MCF 10A (cell line): ENCODE measurements at regions of chr7 and their contacts with region 1.

Region 1: GRCh38 chr7:87152107-87152844 is at the start of gene DMTF1:
- DNase-seq: peak; percentile 96
- H3K4me3 Mint-ChIP-seq: peak within 1 kb of the TSS; percentile 82
- H3K27ac Mint-ChIP-seq: peak within 1 kb of the TSS; percentile 98
- H3K4me1 Mint-ChIP-seq: peaks cover 18% of the 10 kb centered on the region
- H3K27me3 Mint-ChIP-seq: no peaks in the 10 kb centered on the region
- CTCF ChIP-seq: no peak
- total RNA-seq, gene DMTF1: 72.8 and 79.7 TPM in 2 replicates

Region 2: DNA sequence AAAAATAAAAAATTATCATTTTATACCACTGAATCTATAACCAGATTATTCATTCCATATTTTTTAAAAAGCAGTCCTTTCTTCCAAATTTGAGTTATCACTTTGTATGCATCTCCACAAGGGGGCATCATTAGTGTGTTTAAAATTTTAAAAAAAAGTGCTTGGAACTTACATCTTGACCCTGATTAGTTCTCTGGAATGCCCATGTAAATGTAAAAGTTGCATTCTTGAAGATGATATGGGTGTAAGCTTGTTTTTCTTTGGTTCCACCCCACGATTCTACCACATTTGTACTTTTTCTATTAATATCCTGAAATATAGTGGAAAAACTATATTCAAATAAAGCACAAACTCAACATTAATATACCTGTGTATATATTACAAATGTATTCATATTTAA is 237.7 kb before region 1 on chr7:
- CTCF ChIA-PET with region 1: interaction called, 39 read pairs
- POLR2A ChIA-PET with region 1: interaction called, 15 read pairs
- intact Hi-C with region 1: no loop called
- DNase-seq: peak; percentile 34
- H3K4me3 Mint-ChIP-seq: no peak overlapping the region
- H3K27ac Mint-ChIP-seq: no peak overlapping the region
- H3K4me1 Mint-ChIP-seq: peaks cover 7% of the 10 kb centered on the region
- H3K27me3 Mint-ChIP-seq: peaks cover 11% of the 10 kb centered on the region
- CTCF ChIP-seq: peak; percentile 40

Region 3: GRCh38 chr7:86932038-86932512 is 220.2 kb before region 1 on chr7:
- CTCF ChIA-PET with region 1: interaction called, 129 read pairs
- POLR2A ChIA-PET with region 1: interaction called, 22 read pairs
- intact Hi-C with region 1: no loop called
- DNase-seq: peak; percentile 84
- H3K4me3 Mint-ChIP-seq: no peak overlapping the region
- H3K27ac Mint-ChIP-seq: peak overlapping the region; percentile 25
- H3K4me1 Mint-ChIP-seq: peaks cover 22% of the 10 kb centered on the region
- H3K27me3 Mint-ChIP-seq: no peaks in the 10 kb centered on the region
- CTCF ChIP-seq: no peak

Region 4: GRCh38 chr7:86949052-86949778 is 203.1 kb before region 1 on chr7:
- CTCF ChIA-PET with region 1: interaction called, 86 read pairs
- POLR2A ChIA-PET with region 1: interaction called, 3 read pairs
- intact Hi-C with region 1: no loop called
- DNase-seq: no peak
- H3K4me3 Mint-ChIP-seq: no peak overlapping the region
- H3K27ac Mint-ChIP-seq: no peak overlapping the region
- H3K4me1 Mint-ChIP-seq: peaks cover 9% of the 10 kb centered on the region
- H3K27me3 Mint-ChIP-seq: no peaks in the 10 kb centered on the region
- CTCF ChIP-seq: no peak

Region 5: GRCh38 chr7:87059525-87060287 is 92.6 kb before region 1 on chr7 and contains the start of gene ELAPOR2:
- CTCF ChIA-PET with region 1: interaction called, 11 read pairs
- POLR2A ChIA-PET with region 1: interaction called, 13 read pairs
- intact Hi-C with region 1: loop called (anchors 5 kb)
- DNase-seq: peak; percentile 41
- H3K4me3 Mint-ChIP-seq: peak within 1 kb of the TSS; percentile 69
- H3K27ac Mint-ChIP-seq: no peak within 1 kb of the TSS
- H3K4me1 Mint-ChIP-seq: peaks cover 9% of the 10 kb centered on the region
- H3K27me3 Mint-ChIP-seq: peaks cover 17% of the 10 kb centered on the region
- CTCF ChIP-seq: peak; percentile 12
- total RNA-seq, gene ELAPOR2: 16.3 and 21.3 TPM in 2 replicates

Region 6: DNA sequence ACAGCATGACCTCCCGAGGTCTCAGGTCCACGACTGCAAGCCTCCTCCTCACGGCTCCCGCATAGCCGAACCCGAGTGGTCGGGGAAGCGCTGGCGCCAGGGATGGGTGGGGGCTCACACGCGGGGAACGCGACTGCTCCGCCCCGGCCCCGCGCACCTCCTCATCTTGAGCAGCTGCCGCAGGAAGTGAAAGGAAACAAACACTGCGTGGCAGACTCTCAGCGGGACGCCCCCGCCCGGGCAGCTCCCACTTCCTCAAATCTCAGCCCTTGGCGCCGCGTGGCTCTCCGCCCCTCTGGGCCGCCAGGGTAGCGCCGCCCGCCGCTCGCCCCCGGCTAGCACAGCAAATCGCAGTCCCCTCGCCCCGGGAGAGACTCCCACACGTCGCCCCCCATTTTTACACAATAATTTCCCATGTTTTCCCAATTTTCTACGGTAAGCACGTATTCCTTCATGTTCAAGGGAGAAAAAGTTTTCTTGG is 67.3 kb after region 1 on chr7 and contains the start of gene TMEM243:
- CTCF ChIA-PET with region 1: interaction called, 14 read pairs
- POLR2A ChIA-PET with region 1: interaction called, 154 read pairs
- intact Hi-C with region 1: loop called (anchors 2 kb)
- DNase-seq: peak; percentile 56
- H3K4me3 Mint-ChIP-seq: peak within 1 kb of the TSS; percentile 98
- H3K27ac Mint-ChIP-seq: peak within 1 kb of the TSS; percentile 86
- H3K4me1 Mint-ChIP-seq: peaks cover 26% of the 10 kb centered on the region
- H3K27me3 Mint-ChIP-seq: no peaks in the 10 kb centered on the region
- CTCF ChIP-seq: no peak
- total RNA-seq, gene TMEM243: 19.9 and 23.0 TPM in 2 replicates

Region 7: GRCh38 chr7:87345166-87345927 is 193.1 kb after region 1 on chr7 and contains the start of gene CROT:
- CTCF ChIA-PET with region 1: no interaction called
- POLR2A ChIA-PET with region 1: interaction called, 14 read pairs
- intact Hi-C with region 1: loop called (anchors 10 kb)
- DNase-seq: peak; percentile 96
- H3K4me3 Mint-ChIP-seq: peak within 1 kb of the TSS; percentile 99
- H3K27ac Mint-ChIP-seq: peak within 1 kb of the TSS; percentile 88
- H3K4me1 Mint-ChIP-seq: peaks cover 28% of the 10 kb centered on the region
- H3K27me3 Mint-ChIP-seq: no peaks in the 10 kb centered on the region
- CTCF ChIP-seq: no peak
- total RNA-seq, gene CROT: 5.7 and 6.5 TPM in 2 replicates